Mucosa of descending colon (tissue), 3 donors: ENCODE measurements at regions of chr11 and their contacts with region 1.

Region 1: GRCh38 chr11:2428322-2428795 is 16.0 kb downstream of the TRPM5 start:
- DNase-seq: peak in 2 of 3 donors; percentile 89 to 93
- ATAC-seq: peak; percentile 79
- H3K4me3 ChIP-seq: no peak overlapping the region
- H3K4me1 ChIP-seq: peaks cover 10% of the 10 kb centered on the region
- CTCF ChIP-seq: peak; percentile 92

Region 2: GRCh38 chr11:2247496-2247895 is 180.9 kb before region 1 on chr11:
- intact Hi-C with region 1: no loop called
- DNase-seq: no peak
- ATAC-seq: no peak
- H3K4me3 ChIP-seq: no peak overlapping the region
- H3K4me1 ChIP-seq: no peaks in the 10 kb centered on the region
- CTCF ChIP-seq: no peak

Region 3: DNA sequence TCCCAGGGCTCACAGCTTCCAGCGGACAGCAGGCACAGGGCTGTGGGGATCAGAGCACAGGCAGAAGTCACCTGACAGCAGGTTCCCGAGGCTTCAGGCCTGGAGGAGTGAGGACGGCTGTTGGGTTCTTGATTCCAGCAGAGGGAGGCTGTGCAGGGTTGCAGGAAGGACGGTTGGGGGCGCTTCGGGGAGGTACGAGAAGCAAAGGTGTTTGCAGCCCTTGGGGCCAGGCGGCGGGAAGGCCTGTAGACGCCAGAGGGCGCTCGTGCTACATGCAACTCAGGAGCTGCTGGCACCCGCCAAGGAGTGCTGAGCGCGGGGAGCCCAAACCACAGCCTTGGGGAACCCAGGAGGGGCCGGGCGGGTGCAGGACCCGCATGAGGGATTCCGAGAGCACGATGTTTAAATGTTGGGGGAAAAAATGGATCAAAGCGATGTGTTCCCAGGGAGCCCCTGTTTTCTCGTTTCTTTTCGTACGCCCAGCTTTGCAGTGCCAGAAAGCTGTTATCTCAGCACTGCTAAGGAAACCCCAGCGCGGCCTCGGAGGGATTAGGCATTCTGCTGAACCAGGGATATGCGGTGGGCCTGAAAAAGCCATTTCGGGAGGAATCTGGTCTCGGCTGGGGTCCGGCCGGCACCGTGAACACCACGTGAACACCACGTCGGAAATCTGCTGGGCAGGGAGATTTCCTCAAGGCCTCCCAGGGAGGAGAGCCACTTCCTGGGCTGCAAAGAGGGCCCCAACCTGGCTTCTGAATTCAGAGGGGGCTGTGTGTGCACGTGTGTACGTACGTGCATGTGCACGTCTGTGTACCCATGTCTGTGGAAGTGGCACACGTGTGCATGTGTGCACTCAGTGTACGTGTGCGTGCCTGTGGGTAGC is 104.6 kb after region 1 on chr11:
- intact Hi-C with region 1: loop called (anchors 2 kb)
- DNase-seq: peak; percentile 93 to 95 (median 94)
- ATAC-seq: peak; percentile 87
- H3K4me3 ChIP-seq: no peak overlapping the region
- H3K4me1 ChIP-seq: peaks cover 23% of the 10 kb centered on the region
- CTCF ChIP-seq: peak; percentile 98

Region 4: DNA sequence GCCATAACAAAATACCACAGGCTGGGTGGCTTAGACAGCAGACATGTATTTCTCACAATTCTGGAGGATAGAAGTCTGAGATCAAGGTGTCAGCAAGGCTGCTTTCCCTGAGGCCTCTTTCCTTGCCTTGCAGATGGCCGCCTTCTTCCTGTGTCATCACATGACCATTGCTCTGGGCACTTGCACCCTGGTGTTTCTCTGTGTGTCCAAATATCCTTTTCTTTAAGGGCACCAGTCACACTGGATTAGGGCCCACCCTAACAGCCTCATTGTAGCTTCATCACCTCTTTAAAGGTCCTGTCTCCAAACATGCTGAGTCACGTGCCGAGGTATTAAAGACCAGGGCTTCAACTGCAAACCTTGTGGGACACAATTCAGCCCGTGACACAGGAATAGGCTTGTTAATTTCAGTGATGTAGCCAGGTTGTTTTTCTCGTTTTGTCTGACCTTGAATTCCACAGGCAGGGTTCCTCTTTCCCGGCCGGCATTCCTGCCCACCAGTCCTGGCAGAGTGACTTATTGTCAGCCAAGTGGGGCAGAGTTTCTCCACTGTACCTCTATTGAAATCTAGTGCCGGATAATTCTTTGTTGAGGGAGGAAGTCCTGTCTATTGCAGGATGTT is 171.3 kb after region 1 on chr11:
- intact Hi-C with region 1: no loop called
- DNase-seq: no peak
- ATAC-seq: no peak
- H3K4me3 ChIP-seq: no peak overlapping the region
- H3K4me1 ChIP-seq: no peaks in the 10 kb centered on the region
- CTCF ChIP-seq: no peak